CD14-positive monocyte (primary cell): ENCODE measurements at regions of chr22 and their contacts with region 1.

Region 1: DNA sequence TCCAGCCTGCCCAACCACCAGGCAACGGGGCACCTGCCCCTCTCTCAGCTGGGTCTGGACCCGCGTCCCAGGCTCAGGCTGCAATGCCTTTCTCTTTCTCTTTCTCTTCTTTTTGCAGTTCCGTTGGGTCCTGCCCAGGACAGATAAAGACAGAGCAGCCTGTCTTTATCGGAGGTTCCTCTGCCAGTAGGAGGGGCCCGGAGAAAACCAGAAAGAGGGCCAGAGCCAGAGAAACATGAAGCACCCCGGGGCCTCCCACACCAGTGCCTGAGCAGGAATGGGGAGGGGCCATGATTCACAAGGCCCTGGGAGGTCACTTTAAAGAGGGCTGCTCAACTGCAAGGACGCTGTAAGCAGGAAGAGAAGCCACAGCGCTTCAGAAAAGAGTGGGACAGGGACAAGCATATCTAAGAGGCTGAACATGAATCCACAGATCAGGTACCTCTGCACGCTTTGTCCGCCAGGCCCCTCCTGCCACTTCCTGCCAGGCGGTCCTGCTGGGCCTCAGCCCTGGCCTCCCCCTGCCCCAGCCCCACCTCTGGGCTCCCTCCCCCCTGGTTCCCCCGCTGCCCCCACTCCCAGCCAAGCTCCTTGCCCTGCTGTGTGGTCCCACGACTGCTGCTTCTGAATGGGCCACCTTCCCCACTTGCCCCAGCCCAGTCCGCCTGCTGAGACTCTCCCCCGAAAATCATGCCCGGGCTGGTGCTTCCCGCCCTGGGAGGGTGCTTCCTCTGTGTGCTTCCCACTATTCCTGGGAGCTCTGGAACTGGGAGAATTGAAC is at the start of gene APOBEC3C:
- DNase-seq: peak; percentile 74 to 80 (median 77)
- H3K4me3 ChIP-seq: peak within 1 kb of the TSS; percentile 59 to 82 (median 78)
- H3K4me3 Mint-ChIP-seq: peak within 1 kb of the TSS; percentile 86 to 93
- H3K27ac ChIP-seq: peak within 1 kb of the TSS; percentile 63 to 88
- H3K27ac Mint-ChIP-seq: peak within 1 kb of the TSS; percentile 82 to 94 (median 91)
- H3K4me1 ChIP-seq: peaks cover 18 to 20% of the 10 kb centered on the region in 2 donors
- H3K4me1 Mint-ChIP-seq: peaks cover 17% of the 10 kb centered on the region
- H3K27me3 ChIP-seq: no peaks in the 10 kb centered on the region
- H3K27me3 Mint-ChIP-seq: peaks cover 0 to 2% (median 0%) of the 10 kb centered on the region in 3 donors
- CTCF ChIP-seq: no peak
- polyA plus RNA-seq, gene APOBEC3C: 19.7 to 86.3 (median 69.4) TPM

Region 2: DNA sequence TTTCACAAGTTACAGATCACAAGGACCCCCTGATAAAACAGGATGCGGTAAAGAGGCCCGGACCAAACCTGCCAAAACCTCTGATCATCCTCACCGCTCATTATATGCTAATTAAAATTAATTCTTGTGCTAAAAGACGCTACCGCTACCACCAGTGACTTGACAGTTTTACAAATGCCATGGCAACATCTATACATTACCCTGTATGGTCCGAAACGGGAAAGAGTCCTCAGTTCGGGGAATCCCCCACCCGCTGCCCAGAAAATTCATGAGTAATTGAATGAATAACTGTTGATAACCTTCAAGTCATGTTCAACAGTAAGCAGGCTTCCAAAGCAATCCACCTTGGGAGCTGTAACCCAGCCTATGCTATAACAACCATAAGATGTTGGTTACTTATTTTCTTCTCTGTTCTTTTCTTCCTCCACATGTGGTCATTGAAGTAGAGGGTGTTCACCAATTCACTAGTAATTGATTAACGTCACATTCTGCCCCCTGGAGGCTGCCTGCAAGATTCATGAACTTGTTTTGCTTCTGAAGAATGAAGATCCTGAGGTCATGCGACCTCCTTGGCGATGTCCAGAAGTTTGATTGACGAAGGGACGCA is 103.6 kb after region 1 on chr22:
- intact Hi-C with region 1: loop called (anchors 10 kb)
- DNase-seq: peak in 2 of 3 donors; percentile 32 to 43
- H3K4me3 ChIP-seq: no peak overlapping the region
- H3K4me3 Mint-ChIP-seq: no peak overlapping the region
- H3K27ac ChIP-seq: no peak overlapping the region
- H3K27ac Mint-ChIP-seq: peak overlapping the region in 1 of 7 donors; percentile 38
- H3K4me1 ChIP-seq: peaks cover 6 to 8% of the 10 kb centered on the region in 2 donors
- H3K4me1 Mint-ChIP-seq: peaks cover 13% of the 10 kb centered on the region
- H3K27me3 ChIP-seq: no peaks in the 10 kb centered on the region
- H3K27me3 Mint-ChIP-seq: peaks cover 4 to 13% (median 11%) of the 10 kb centered on the region in 3 donors
- CTCF ChIP-seq: peak; percentile 33